IMR-90 (cell line): ENCODE measurements at regions of chr9 and their contacts with region 1.

Region 1: GRCh38 chr9:84031534-84031933 is 50.9 kb downstream of the RMI1 start:
- DNase-seq: no peak
- ATAC-seq: no peak
- H3K4me3 ChIP-seq: no peak overlapping the region
- H3K27ac ChIP-seq: no peak overlapping the region
- H3K4me1 ChIP-seq: no peaks in the 10 kb centered on the region
- H3K27me3 ChIP-seq: no peaks in the 10 kb centered on the region
- CTCF ChIP-seq: no peak
- POLR2A ChIP-seq: no peak
- RAD21 ChIP-seq: no peak

Region 2: DNA sequence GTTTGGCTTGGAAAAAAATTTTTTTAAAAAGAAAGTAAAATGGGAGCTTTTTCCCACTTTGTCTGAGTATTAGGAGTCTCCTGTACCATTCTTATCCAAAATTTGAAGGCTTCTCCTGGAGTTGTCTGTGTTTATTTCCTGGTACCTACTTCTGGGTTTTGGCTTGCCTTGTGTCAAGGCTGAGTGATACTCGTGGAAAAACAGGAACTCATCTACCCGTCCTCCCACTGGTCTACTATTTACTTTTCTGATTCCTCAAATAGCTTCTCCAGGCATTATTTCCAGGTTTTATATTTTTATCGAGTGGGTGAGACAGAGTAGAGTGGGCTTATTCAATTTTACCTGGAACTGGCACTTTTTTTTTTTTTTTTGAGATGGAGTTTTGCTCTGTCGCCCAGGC is 48.5 kb after region 1 on chr9:
- CTCF ChIA-PET with region 1: no interaction called
- POLR2A ChIA-PET with region 1: no interaction called
- dilution Hi-C with region 1: no loop called
- in situ Hi-C with region 1: no loop called
- intact Hi-C with region 1: loop called (anchors 5 kb)
- DNase-seq: no peak
- ATAC-seq: no peak
- H3K4me3 ChIP-seq: no peak overlapping the region
- H3K27ac ChIP-seq: no peak overlapping the region
- H3K4me1 ChIP-seq: no peaks in the 10 kb centered on the region
- H3K27me3 ChIP-seq: peaks cover 3% of the 10 kb centered on the region; the same call in 1 of the 2 replicates
- CTCF ChIP-seq: no peak
- POLR2A ChIP-seq: no peak
- RAD21 ChIP-seq: no peak